Activated T-helper 2 cell treated with anti-CD3 and anti-CD28 coated beads, Interferon-gamma antibody, Interleukin-2, Interleukin-4, amounts not matched to agents 10 μg/mL and 5 μg/mL and 100 μg/mL, durations not matched to agents 14 hours and 24 hours and 36 hours (primary cell): ENCODE measurements at regions of chr11 and their contacts with region 1.

Region 1: DNA sequence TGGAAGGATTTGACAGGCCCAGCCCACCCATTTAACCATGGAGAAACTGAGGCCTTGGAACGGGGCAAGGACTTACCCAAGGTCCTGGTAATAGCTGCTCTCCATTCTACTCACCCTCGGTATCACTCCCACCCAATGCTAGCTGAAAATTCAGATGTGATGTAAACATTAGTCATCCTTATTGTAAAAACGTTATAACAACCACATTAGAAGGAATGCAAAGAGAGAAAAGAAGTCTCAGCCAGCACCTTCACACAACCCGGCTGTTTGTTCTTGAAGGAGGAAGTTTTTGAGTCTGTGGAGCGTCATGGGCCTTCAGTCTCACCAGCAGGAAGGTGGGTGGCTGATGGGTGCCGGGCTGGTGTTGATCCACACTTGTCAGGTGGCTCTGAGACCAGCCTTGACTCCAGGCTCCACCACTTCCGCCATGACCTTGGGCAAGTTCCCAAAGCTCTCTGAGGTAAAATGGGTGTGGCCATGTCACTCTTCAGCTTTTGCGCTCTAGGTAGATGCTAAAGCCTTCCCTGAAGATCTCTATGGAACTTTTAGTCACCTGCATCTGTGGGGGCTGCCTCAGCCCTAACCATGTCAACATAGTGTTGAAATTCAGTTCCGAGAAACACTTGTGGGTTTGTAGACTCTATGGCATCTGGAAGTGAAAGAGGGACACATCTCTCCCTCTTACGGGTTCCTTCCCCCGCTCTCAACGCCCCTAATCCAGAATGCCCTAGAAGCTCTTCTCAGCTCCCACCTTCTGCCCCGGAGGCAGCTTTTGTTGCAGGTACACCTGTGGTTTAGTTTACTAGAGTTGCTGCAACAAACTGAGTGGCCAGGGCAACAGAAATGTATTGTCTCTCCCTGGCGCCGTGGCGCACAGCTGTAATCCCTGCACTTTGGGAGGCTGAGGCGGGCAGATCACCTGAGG is 14.8 kb downstream of the CD6 start:
- DNase-seq: peak; percentile 82
- H3K4me3 Mint-ChIP-seq: peak overlapping the region; percentile 83
- H3K27ac Mint-ChIP-seq: peak overlapping the region; percentile 94
- H3K4me1 Mint-ChIP-seq: peaks cover 86% of the 10 kb centered on the region
- H3K27me3 Mint-ChIP-seq: no peaks in the 10 kb centered on the region

Region 2: DNA sequence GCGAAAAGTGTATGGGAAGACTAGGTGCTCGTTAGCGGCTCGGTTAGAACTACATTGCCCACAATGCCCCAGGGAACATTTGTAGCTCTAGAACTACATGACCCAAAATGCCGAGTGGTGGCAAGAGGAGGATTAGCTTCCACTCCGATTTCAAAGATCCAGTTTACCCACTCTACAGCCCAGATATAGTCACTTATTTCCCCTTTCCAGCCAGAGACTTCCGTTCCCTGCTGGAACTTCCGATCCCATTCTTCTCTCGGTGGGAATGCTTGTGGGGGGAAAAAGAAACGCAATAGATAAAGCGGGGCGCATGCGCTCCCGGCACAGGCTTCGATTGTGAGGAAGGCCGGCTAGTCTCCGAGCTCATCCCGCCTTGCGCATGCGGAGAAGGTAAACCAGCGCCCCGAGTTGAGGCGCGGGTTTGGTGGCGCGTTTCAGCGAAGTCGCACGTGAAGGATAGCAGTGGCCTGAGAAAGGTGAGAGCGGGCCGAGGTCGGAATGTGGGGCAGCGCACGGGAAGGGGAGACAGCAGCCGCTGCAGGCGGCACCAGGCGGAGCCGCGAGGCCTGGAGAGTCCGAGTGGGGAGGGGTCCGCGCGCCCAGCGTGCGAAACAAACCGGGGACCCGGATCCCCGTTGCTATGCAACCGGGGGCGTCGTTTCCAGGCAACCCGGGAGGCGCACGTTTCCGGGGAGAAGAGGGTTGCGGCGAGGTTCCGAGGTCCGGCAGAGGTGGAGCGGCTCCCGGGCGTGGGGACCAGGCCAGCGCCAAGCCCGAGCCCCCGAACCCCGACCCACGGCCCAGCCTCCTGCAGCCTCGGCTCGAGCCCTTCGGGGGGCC is 72.2 kb before region 1 on chr11 and contains the start of gene TMEM109:
- intact Hi-C with region 1: loop called (anchors 2 kb)
- DNase-seq: peak; percentile 85
- H3K4me3 Mint-ChIP-seq: peak within 1 kb of the TSS; percentile 99
- H3K27ac Mint-ChIP-seq: peak within 1 kb of the TSS; percentile 99
- H3K4me1 Mint-ChIP-seq: peaks cover 56% of the 10 kb centered on the region
- H3K27me3 Mint-ChIP-seq: peaks cover 4% of the 10 kb centered on the region
- total RNA-seq, gene TMEM109: 112 and 120 TPM in 2 replicates

Region 3: DNA sequence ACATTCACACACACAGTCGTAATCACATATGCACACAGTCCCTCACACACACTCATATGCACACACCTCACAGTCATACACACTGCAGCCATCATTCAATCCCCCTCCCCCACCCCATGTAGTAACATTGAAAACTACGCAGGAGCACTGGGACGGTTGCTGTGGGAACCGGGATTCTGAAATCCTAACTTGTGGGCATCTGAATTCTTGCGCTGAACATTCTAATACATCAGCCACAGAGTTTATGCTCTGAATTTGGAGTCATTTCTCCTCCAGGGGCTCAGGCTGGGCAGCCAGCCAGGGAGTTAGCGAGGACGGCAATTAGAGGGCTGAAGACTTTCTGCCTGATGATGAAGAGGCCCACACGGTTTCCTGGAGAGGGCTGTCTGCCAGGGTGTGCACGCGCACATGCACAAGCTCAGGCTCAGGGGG is 17.9 kb after region 1 on chr11:
- intact Hi-C with region 1: loop called (anchors 2 kb)
- DNase-seq: no peak
- H3K4me3 Mint-ChIP-seq: peak overlapping the region; percentile 71
- H3K27ac Mint-ChIP-seq: peak overlapping the region; percentile 73
- H3K4me1 Mint-ChIP-seq: peaks cover 62% of the 10 kb centered on the region
- H3K27me3 Mint-ChIP-seq: no peaks in the 10 kb centered on the region

Region 4: GRCh38 chr11:61021661-61022212 is 35.5 kb after region 1 on chr11:
- intact Hi-C with region 1: loop called (anchors 2 kb)
- DNase-seq: peak; percentile 77
- H3K4me3 Mint-ChIP-seq: peak overlapping the region; percentile 66
- H3K27ac Mint-ChIP-seq: peak overlapping the region; percentile 92
- H3K4me1 Mint-ChIP-seq: peaks cover 68% of the 10 kb centered on the region
- H3K27me3 Mint-ChIP-seq: no peaks in the 10 kb centered on the region

Region 5: DNA sequence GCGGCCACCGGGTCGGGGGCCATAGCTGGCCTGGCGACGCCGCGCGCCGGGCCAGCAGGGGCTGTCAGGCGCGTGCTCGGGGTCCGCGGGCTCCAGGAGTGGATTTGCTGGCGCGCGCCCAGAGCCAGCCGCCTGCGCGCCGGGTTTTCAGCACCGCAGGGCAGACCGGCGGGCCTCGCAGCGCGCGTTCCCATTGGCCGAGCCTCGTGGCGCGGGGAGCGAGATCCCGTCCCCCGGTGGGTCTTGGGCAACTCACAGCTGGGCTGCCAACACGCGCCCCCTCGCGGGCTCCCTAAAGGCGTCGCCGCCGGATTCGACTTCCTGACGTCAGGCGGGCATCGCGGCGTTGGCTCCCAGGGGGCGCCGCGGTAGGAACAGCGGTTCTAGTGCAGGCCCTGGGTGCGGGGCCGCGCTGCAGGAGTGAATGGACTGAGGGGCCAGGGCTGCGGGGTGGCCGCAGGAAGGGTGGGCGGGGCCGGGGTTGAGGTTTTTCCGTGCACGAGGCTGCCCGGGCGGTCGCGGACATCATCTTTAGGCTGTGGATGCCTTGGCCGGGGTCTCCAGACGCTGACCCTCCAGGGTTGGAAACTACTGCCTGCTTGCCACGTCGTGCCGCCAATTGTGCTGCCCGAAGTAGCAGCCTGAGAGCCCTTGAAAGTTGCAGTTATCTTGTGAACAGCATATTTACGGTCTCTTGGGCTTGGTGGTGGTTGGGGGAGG is 830.6 kb after region 1 on chr11 and contains the start of gene FADS1:
- intact Hi-C with region 1: loop called (anchors 2 kb)
- DNase-seq: peak; percentile 84
- H3K4me3 Mint-ChIP-seq: peak within 1 kb of the TSS; percentile 99
- H3K27ac Mint-ChIP-seq: peak within 1 kb of the TSS; percentile 96
- H3K4me1 Mint-ChIP-seq: peaks cover 20% of the 10 kb centered on the region
- H3K27me3 Mint-ChIP-seq: no peaks in the 10 kb centered on the region
- total RNA-seq, gene FADS1: 114 and 116 TPM in 2 replicates